H1 (cell line): ENCODE measurements at regions of chr11 and their contacts with region 1.

Region 1: GRCh38 chr11:47715082-47715669 is at the start of gene AGBL2:
- DNase-seq: peak; percentile 39 to 88
- H3K4me3 ChIP-seq: peak within 1 kb of the TSS; percentile 60 to 70 (median 65)
- H3K27ac ChIP-seq: peak within 1 kb of the TSS; percentile 58
- H3K4me1 ChIP-seq: peaks cover 0 to 5% (median 2%) of the 10 kb centered on the region in 4 experiments; a peak in 1 of 7 replicates
- H3K27me3 ChIP-seq: no peaks in the 10 kb centered on the region
- CTCF ChIP-seq: no peak
- EP300 ChIP-seq: no peak
- POLR2A ChIP-seq: peak in 1 of 2 experiments; percentile 82; a peak in 2 of 3 replicates
- RAD21 ChIP-seq: 0 out of 4 replicates have a peak, but pooled peaks of 1 of the 2 experiments have one; percentile 1
- total RNA-seq, gene AGBL2: 2.1 and 5.3 TPM in 2 replicates

Region 2: GRCh38 chr11:47642099-47642855 is 72.9 kb before region 1 on chr11 and contains the start of gene MTCH2:
- CTCF ChIA-PET with region 1: interaction called, 3 read pairs
- POLR2A ChIA-PET with region 1: interaction called, 12 read pairs
- DNase-seq: peak; percentile 87 to 95
- H3K4me3 ChIP-seq: peak within 1 kb of the TSS; percentile 77 to 92 (median 84)
- H3K27ac ChIP-seq: peak within 1 kb of the TSS; percentile 88
- H3K4me1 ChIP-seq: peaks cover 0 to 5% (median 0%) of the 10 kb centered on the region in 4 experiments; a peak in 3 of 7 replicates
- H3K27me3 ChIP-seq: no peaks in the 10 kb centered on the region
- CTCF ChIP-seq: no peak
- EP300 ChIP-seq: no peak
- POLR2A ChIP-seq: peak; percentile 72 to 88
- RAD21 ChIP-seq: no peak
- total RNA-seq, gene MTCH2: 157 and 167 TPM in 2 replicates

Region 3: GRCh38 chr11:47689480-47689879 is 25.7 kb before region 1 on chr11:
- CTCF ChIA-PET with region 1: no interaction called
- POLR2A ChIA-PET with region 1: no interaction called
- DNase-seq: no peak
- H3K4me3 ChIP-seq: no peak overlapping the region
- H3K27ac ChIP-seq: no peak overlapping the region
- H3K4me1 ChIP-seq: no peaks in the 10 kb centered on the region
- H3K27me3 ChIP-seq: no peaks in the 10 kb centered on the region
- CTCF ChIP-seq: no peak
- EP300 ChIP-seq: no peak
- POLR2A ChIP-seq: no peak
- RAD21 ChIP-seq: no peak

Region 4: GRCh38 chr11:47766305-47767227 is 51.4 kb after region 1 on chr11:
- CTCF ChIA-PET with region 1: no interaction called
- POLR2A ChIA-PET with region 1: interaction called, 10 read pairs
- DNase-seq: no peak
- H3K4me3 ChIP-seq: peak overlapping the region; percentile 87 to 98 (median 94)
- H3K27ac ChIP-seq: peak overlapping the region; percentile 83
- H3K4me1 ChIP-seq: 0 out of 7 replicates have a peak, but pooled peaks cover 0 to 1% (median 0%) of the 10 kb centered on the region in 4 experiments
- H3K27me3 ChIP-seq: no peaks in the 10 kb centered on the region
- CTCF ChIP-seq: no peak
- EP300 ChIP-seq: no peak
- POLR2A ChIP-seq: no peak; a peak in 1 of 3 replicates
- RAD21 ChIP-seq: no peak